ENCODE measurements at regions of chr3 and their contacts with region 1.

Region 1: GRCh38 chr3:46368569-46368968 is 2.2 kb upstream of the CCR5 start:
- DNase-seq: peak; percentile 18 to 90 (median 54)
- ATAC-seq: peak; percentile 74
- H3K4me3 ChIP-seq: no peak overlapping the region
- H3K4me3 Mint-ChIP-seq: peak overlapping the region; percentile 2
- H3K27ac ChIP-seq: no peak overlapping the region
- H3K27ac Mint-ChIP-seq: peak overlapping the region; percentile 77
- H3K4me1 ChIP-seq: peaks cover 57% of the 10 kb centered on the region
- H3K4me1 Mint-ChIP-seq: peaks cover 40% of the 10 kb centered on the region
- H3K27me3 ChIP-seq: no peaks in the 10 kb centered on the region
- H3K27me3 Mint-ChIP-seq: no peaks in the 10 kb centered on the region
- CTCF ChIP-seq: no peak

Region 2: DNA sequence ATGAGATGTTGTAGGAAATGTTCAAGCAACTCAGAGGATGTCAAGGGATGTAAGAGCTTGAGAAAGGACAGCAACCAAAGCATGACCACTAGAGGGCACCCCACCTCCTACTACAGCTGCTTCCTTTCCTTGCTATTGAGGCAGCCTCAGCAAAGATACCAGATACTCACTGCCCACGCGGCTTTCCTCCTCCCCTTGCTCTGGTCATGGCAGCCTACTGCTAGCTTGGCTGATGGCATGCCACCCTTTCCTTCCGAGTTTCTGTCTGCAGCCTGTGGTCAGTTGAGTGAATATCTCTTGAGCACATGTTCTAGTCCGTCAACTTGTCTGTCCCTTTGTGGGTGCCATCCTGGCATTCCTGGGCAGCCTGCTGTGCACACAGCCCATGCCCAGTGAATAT is 429.7 kb before region 1 on chr3:
- CTCF ChIA-PET with region 1: interaction called, 10 read pairs
- POLR2A ChIA-PET with region 1: no interaction called
- intact Hi-C with region 1: no loop called
- DNase-seq: peak; percentile 72 to 93 (median 82)
- ATAC-seq: peak; percentile 65
- H3K4me3 ChIP-seq: no peak overlapping the region
- H3K4me3 Mint-ChIP-seq: no peak overlapping the region
- H3K27ac ChIP-seq: no peak overlapping the region
- H3K27ac Mint-ChIP-seq: no peak overlapping the region
- H3K4me1 ChIP-seq: peaks cover 30% of the 10 kb centered on the region
- H3K4me1 Mint-ChIP-seq: peaks cover 37% of the 10 kb centered on the region
- H3K27me3 ChIP-seq: no peaks in the 10 kb centered on the region
- H3K27me3 Mint-ChIP-seq: no peaks in the 10 kb centered on the region
- CTCF ChIP-seq: peak; percentile 83

Region 3: DNA sequence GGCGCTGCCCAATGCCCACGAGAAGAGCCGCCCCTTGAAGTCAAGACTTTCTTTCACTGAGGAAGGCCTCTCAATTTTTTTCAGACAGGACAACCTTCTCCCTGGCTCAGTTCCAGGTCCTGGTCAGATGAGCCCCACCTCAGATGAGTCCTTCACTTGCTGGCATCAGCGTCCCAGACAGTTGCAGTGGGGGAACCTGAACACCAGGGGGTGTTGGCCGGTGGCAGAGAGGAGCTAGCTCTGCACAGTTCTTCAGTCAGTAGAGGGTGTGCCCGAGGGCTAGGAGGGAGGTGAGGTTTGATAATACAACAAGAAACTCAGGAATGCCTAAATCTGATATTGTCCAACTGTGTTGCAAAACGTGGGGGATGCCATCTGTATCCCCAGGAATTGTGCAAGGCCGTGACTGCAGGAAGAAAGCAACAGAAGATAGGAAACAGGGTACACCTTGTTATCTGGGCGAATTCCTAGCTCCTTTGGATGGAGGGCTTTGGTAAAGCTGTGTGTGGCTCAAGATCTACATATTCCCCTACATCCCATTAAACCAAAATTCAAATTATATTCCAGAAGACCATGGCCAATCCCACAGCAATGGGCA is 92.0 kb before region 1 on chr3:
- CTCF ChIA-PET with region 1: interaction called, 86 read pairs
- POLR2A ChIA-PET with region 1: interaction called, 7 read pairs
- intact Hi-C with region 1: loop called in 1 of 2 experiments (anchors 1 kb)
- DNase-seq: peak; percentile 53 to 87 (median 70)
- ATAC-seq: peak; percentile 82
- H3K4me3 ChIP-seq: no peak overlapping the region
- H3K4me3 Mint-ChIP-seq: no peak overlapping the region
- H3K27ac ChIP-seq: no peak overlapping the region
- H3K27ac Mint-ChIP-seq: no peak overlapping the region
- H3K4me1 ChIP-seq: peaks cover 40% of the 10 kb centered on the region
- H3K4me1 Mint-ChIP-seq: peaks cover 29% of the 10 kb centered on the region
- H3K27me3 ChIP-seq: no peaks in the 10 kb centered on the region
- H3K27me3 Mint-ChIP-seq: no peaks in the 10 kb centered on the region
- CTCF ChIP-seq: peak; percentile 72

Region 4: DNA sequence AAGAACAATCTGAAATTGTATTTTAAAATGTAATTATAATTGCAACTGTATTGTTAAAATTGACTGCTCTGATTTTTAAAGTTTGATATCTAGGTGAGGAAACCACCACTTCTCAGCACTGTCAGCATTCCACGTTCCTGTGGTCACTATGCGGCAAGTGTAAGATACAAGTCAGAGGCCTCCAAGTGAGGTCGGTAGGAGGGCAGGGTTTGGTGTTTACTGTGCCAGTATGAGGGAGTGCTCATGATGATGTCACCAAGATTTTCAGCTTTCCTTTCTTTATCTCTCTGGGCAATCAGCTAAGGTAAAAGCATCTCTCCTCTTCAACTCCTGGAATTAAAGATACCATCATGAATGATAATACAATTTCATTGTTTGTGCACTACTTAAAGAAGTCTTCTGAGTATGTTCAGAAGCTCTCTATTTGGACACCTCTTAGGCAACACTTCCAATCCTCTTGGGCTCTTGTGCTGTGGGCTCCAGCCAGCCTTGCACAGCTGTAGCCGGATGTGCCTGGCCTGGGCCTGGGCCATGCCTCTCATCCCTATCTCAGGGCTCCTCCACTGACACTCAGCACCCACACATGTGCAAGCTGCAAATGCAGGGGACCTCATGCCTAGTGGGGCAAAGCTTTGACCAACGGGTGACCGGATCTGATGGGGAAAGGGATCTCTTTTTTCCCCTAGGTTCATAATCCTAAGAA is 83.4 kb before region 1 on chr3:
- CTCF ChIA-PET with region 1: interaction called, 11 read pairs
- POLR2A ChIA-PET with region 1: interaction called, 7 read pairs
- intact Hi-C with region 1: no loop called
- DNase-seq: peak in 8 of 14 experiments; percentile 11 to 88 (median 44)
- ATAC-seq: peak; percentile 74
- H3K4me3 ChIP-seq: no peak overlapping the region
- H3K4me3 Mint-ChIP-seq: peak overlapping the region; percentile 60
- H3K27ac ChIP-seq: peak overlapping the region in 1 of 2 donors; percentile 64
- H3K27ac Mint-ChIP-seq: peak overlapping the region; percentile 72
- H3K4me1 ChIP-seq: peaks cover 70% of the 10 kb centered on the region
- H3K4me1 Mint-ChIP-seq: peaks cover 53% of the 10 kb centered on the region
- H3K27me3 ChIP-seq: no peaks in the 10 kb centered on the region
- H3K27me3 Mint-ChIP-seq: no peaks in the 10 kb centered on the region
- CTCF ChIP-seq: no peak

Region 5: GRCh38 chr3:46297658-46298463 is 70.7 kb before region 1 on chr3:
- CTCF ChIA-PET with region 1: interaction called, 11 read pairs
- POLR2A ChIA-PET with region 1: no interaction called
- intact Hi-C with region 1: no loop called
- DNase-seq: no peak
- ATAC-seq: no peak
- H3K4me3 ChIP-seq: no peak overlapping the region
- H3K4me3 Mint-ChIP-seq: no peak overlapping the region
- H3K27ac ChIP-seq: peak overlapping the region in 1 of 2 donors; percentile 33
- H3K27ac Mint-ChIP-seq: peak overlapping the region; percentile 43
- H3K4me1 ChIP-seq: peaks cover 81% of the 10 kb centered on the region
- H3K4me1 Mint-ChIP-seq: peaks cover 80% of the 10 kb centered on the region
- H3K27me3 ChIP-seq: no peaks in the 10 kb centered on the region
- H3K27me3 Mint-ChIP-seq: no peaks in the 10 kb centered on the region
- CTCF ChIP-seq: no peak

Region 6: DNA sequence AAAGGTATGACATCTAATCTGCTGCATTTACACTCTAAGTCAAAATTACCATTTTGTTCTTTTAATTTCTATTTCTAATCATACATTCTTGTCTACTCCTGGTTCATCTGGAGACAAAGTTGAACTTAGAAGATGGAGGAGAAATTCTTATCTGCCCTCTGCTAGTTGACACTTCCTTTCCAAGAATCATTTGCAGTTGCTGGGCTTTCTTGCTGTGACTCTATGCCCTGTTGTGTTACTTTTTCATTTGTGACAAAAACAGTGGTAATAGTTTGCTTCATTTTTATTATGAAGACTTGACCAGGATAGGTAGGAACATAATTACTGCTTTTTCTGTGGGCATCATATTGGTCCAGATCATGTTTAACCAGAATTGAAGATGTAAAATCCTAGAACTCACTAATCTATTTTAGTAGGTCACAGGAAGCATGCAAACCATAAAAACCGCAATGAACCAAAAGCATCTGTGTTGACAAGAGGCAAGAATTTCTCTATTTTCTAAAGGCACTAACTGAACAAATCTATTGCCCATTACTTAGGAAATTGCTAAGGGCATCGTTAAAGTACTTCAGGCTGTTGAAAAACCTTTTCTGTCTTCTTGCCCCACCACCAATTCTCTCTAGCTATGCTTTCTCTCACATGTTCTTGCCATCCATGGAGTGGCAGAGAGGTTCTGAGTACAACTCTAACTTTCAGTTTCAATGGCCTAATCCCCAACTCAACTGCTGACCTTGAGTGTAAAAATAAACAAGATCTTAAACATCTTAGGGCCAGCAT is 18.9 kb before region 1 on chr3:
- CTCF ChIA-PET with region 1: interaction called, 13 read pairs
- POLR2A ChIA-PET with region 1: interaction called, 7 read pairs
- intact Hi-C with region 1: no loop called
- DNase-seq: peak in 3 of 14 experiments; percentile 56 to 75 (median 56)
- ATAC-seq: no peak
- H3K4me3 ChIP-seq: no peak overlapping the region
- H3K4me3 Mint-ChIP-seq: peak overlapping the region; percentile 3
- H3K27ac ChIP-seq: peak overlapping the region; percentile 8 to 27
- H3K27ac Mint-ChIP-seq: peak overlapping the region; percentile 13
- H3K4me1 ChIP-seq: peaks cover 47% of the 10 kb centered on the region
- H3K4me1 Mint-ChIP-seq: peaks cover 68% of the 10 kb centered on the region
- H3K27me3 ChIP-seq: no peaks in the 10 kb centered on the region
- H3K27me3 Mint-ChIP-seq: no peaks in the 10 kb centered on the region
- CTCF ChIP-seq: no peak

Region 7: GRCh38 chr3:46725621-46726314 is 357.2 kb after region 1 on chr3:
- CTCF ChIA-PET with region 1: no interaction called
- POLR2A ChIA-PET with region 1: no interaction called
- intact Hi-C with region 1: no loop called
- DNase-seq: no peak
- ATAC-seq: no peak
- H3K4me3 ChIP-seq: no peak overlapping the region
- H3K4me3 Mint-ChIP-seq: no peak overlapping the region
- H3K27ac ChIP-seq: no peak overlapping the region
- H3K27ac Mint-ChIP-seq: no peak overlapping the region
- H3K4me1 ChIP-seq: no peaks in the 10 kb centered on the region
- H3K4me1 Mint-ChIP-seq: no peaks in the 10 kb centered on the region
- H3K27me3 ChIP-seq: no peaks in the 10 kb centered on the region
- H3K27me3 Mint-ChIP-seq: peaks cover 16% of the 10 kb centered on the region
- CTCF ChIP-seq: no peak